B cell (primary cell): ENCODE measurements at regions of chr15 and their contacts with region 1.

Region 1: GRCh38 chr15:41811432-41812195 is 16.3 kb upstream of the JMJD7 start:
- DNase-seq: peak; percentile 82
- ATAC-seq: peak; percentile 92
- H3K4me3 ChIP-seq: no peak overlapping the region
- H3K4me3 Mint-ChIP-seq: no peak overlapping the region
- H3K27ac ChIP-seq: no peak overlapping the region
- H3K27ac Mint-ChIP-seq: no peak overlapping the region
- H3K4me1 ChIP-seq: peaks cover 5 to 20% of the 10 kb centered on the region in 2 donors
- H3K4me1 Mint-ChIP-seq: peaks cover 10% of the 10 kb centered on the region
- H3K27me3 ChIP-seq: no peaks in the 10 kb centered on the region
- H3K27me3 Mint-ChIP-seq: no peaks in the 10 kb centered on the region
- CTCF ChIP-seq: peak; percentile 88

Region 2: DNA sequence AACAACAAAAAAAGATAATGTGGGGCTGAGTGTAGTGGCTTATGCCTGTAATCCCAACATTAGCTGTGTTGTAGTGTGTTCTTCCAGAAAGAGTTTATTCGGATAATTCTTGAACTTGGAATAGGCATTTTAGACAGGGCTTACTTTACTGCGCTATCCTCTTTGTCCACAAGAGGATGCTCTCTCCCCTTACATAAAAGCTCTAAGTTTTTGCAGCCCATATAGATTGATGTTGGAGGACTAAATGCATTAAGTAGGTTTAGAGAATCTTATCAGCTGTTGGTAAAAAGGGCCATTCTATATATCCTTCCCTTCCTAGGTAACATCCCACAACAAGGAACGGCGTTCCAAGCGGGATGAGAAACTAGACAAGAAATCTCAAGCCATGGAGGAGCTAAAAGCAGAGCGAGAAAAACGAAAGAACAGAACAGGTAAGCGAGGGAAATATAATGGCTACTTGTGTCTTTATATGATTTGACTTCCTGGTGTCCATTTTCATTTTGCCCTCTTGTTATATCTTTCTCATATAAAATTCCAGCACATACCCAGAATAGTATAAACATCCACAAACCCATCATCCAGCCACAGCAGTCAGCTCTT is 345.7 kb before region 1 on chr15:
- CTCF ChIA-PET with region 1: interaction called, 36 read pairs
- POLR2A ChIA-PET with region 1: interaction called, 9 read pairs
- intact Hi-C with region 1: loop called (anchors 2 kb)
- DNase-seq: peak; percentile 60
- ATAC-seq: peak; percentile 54
- H3K4me3 ChIP-seq: no peak overlapping the region
- H3K4me3 Mint-ChIP-seq: no peak overlapping the region
- H3K27ac ChIP-seq: no peak overlapping the region
- H3K27ac Mint-ChIP-seq: no peak overlapping the region
- H3K4me1 ChIP-seq: no peaks in the 10 kb centered on the region
- H3K4me1 Mint-ChIP-seq: peaks cover 5% of the 10 kb centered on the region
- H3K27me3 ChIP-seq: no peaks in the 10 kb centered on the region
- H3K27me3 Mint-ChIP-seq: no peaks in the 10 kb centered on the region
- CTCF ChIP-seq: peak; percentile 95

Region 3: DNA sequence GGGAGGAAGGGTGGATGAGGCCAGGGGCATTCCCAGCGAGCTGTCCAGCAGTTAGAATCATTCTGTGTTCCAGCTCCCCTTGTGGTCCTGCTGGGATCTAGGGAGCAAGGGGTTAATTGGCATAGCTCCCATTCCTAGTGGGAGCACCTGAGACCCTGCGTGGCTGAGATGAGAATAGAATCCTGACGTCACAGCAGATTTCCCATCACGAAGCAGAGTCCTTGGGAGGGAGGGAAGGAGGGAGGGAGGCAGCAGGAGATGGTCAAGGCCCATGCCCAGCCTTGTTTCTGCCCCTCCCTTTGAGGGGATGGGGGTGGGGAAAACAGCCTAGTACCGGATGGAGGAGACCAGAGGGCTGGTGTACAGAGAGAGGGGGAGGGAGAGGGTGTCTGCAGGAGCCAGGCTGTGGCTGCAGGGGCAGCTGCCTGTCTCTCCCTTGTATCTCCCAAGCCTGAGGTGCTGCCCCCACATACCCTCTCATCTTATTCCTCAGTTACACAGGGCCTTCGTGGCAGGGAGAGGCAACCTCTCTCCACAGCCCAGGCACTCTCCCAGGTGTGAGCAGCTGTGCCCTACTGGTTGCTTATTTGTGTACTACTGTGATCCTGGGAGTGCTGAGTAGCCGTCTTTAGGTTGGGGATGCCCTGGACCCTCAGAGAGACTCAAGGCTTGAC is 247.2 kb before region 1 on chr15:
- CTCF ChIA-PET with region 1: no interaction called
- POLR2A ChIA-PET with region 1: no interaction called
- intact Hi-C with region 1: no loop called
- DNase-seq: no peak
- ATAC-seq: no peak
- H3K4me3 ChIP-seq: no peak overlapping the region
- H3K4me3 Mint-ChIP-seq: no peak overlapping the region
- H3K27ac ChIP-seq: no peak overlapping the region
- H3K27ac Mint-ChIP-seq: no peak overlapping the region
- H3K4me1 ChIP-seq: peaks cover 6 to 8% of the 10 kb centered on the region in 2 donors
- H3K4me1 Mint-ChIP-seq: peaks cover 4% of the 10 kb centered on the region
- H3K27me3 ChIP-seq: peaks cover 0 to 28% (median 10%) of the 10 kb centered on the region in 4 experiments
- H3K27me3 Mint-ChIP-seq: peaks cover 31% of the 10 kb centered on the region
- CTCF ChIP-seq: no peak

Region 4: DNA sequence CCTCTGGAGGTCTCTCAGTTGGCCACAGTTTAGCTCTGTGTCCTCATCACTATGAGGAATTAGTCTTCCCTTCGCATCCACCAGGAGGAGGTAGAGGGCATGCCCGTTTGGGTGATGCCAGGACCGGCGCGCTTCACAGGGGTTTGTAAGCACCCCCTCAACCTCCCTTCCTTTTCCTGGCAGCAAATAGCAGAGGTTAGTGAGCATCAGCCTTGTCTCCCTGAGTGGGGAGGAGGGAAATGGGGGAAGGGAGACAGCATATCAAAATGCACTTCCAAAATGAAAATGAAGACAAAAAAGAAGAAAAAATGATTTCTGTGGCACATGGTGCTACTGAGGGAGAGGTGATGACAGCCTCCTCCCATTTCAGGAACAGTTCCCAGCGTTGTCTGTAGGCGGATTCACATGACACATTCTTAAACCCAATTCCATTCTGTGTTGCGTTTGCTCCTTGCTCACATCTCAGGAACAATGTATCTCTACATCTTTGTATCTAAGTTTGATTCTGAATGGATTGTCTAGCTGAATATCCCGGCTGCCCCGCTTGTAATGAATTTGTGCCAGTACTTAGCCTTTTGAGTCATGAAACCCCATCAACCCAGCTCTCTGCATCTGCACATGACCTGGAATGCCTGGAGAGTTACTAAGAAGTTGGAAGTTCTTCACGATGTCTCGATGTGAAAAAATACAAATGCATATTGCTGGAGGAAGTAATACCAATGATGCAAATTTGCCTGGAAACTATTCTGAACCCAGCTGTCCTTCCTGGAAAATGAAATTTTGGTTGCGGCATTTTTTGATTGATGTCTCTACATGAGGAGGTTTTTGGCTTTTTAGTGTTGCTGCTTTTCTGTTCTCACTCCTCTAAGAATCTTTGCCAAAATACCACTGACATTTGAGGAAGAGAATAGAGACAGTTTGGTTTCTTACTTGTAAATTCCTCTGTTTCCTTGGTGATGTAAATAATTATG is 207.4 kb before region 1 on chr15:
- CTCF ChIA-PET with region 1: interaction called, 46 read pairs
- POLR2A ChIA-PET with region 1: no interaction called
- intact Hi-C with region 1: no loop called
- DNase-seq: peak; percentile 74
- ATAC-seq: peak; percentile 85
- H3K4me3 ChIP-seq: peak overlapping the region in 3 of 5 experiments; percentile 2 to 31 (median 29)
- H3K4me3 Mint-ChIP-seq: peak overlapping the region; percentile 77
- H3K27ac ChIP-seq: no peak overlapping the region
- H3K27ac Mint-ChIP-seq: no peak overlapping the region
- H3K4me1 ChIP-seq: peaks cover 8 to 10% of the 10 kb centered on the region in 2 donors
- H3K4me1 Mint-ChIP-seq: peaks cover 9% of the 10 kb centered on the region
- H3K27me3 ChIP-seq: peaks cover 0 to 17% (median 5%) of the 10 kb centered on the region in 4 experiments
- H3K27me3 Mint-ChIP-seq: peaks cover 34% of the 10 kb centered on the region
- CTCF ChIP-seq: peak; percentile 80

Region 5: GRCh38 chr15:41695750-41696426 is 115.7 kb before region 1 on chr15:
- CTCF ChIA-PET with region 1: interaction called, 25 read pairs
- POLR2A ChIA-PET with region 1: no interaction called
- intact Hi-C with region 1: loop called (anchors 1 kb)
- DNase-seq: peak; percentile 80
- ATAC-seq: peak; percentile 99
- H3K4me3 ChIP-seq: peak overlapping the region in 2 of 5 experiments; percentile 19 to 21
- H3K4me3 Mint-ChIP-seq: peak overlapping the region; percentile 35
- H3K27ac ChIP-seq: peak overlapping the region; percentile 52 to 77
- H3K27ac Mint-ChIP-seq: peak overlapping the region; percentile 51
- H3K4me1 ChIP-seq: peaks cover 12 to 28% of the 10 kb centered on the region in 2 donors
- H3K4me1 Mint-ChIP-seq: peaks cover 45% of the 10 kb centered on the region
- H3K27me3 ChIP-seq: no peaks in the 10 kb centered on the region
- H3K27me3 Mint-ChIP-seq: no peaks in the 10 kb centered on the region
- CTCF ChIP-seq: peak; percentile 66

Region 6: GRCh38 chr15:41790756-41791546 is 20.7 kb before region 1 on chr15:
- CTCF ChIA-PET with region 1: interaction called, 24 read pairs
- POLR2A ChIA-PET with region 1: no interaction called
- intact Hi-C with region 1: no loop called
- DNase-seq: no peak
- ATAC-seq: no peak
- H3K4me3 ChIP-seq: no peak overlapping the region
- H3K4me3 Mint-ChIP-seq: peak overlapping the region; percentile 4
- H3K27ac ChIP-seq: no peak overlapping the region
- H3K27ac Mint-ChIP-seq: no peak overlapping the region
- H3K4me1 ChIP-seq: peaks cover 32 to 41% of the 10 kb centered on the region in 2 donors
- H3K4me1 Mint-ChIP-seq: peaks cover 54% of the 10 kb centered on the region
- H3K27me3 ChIP-seq: no peaks in the 10 kb centered on the region
- H3K27me3 Mint-ChIP-seq: no peaks in the 10 kb centered on the region
- CTCF ChIP-seq: no peak

Region 7: GRCh38 chr15:41795996-41796856 is 15.4 kb before region 1 on chr15:
- CTCF ChIA-PET with region 1: interaction called, 27 read pairs
- POLR2A ChIA-PET with region 1: no interaction called
- intact Hi-C with region 1: no loop called
- DNase-seq: no peak
- ATAC-seq: no peak
- H3K4me3 ChIP-seq: no peak overlapping the region
- H3K4me3 Mint-ChIP-seq: no peak overlapping the region
- H3K27ac ChIP-seq: no peak overlapping the region
- H3K27ac Mint-ChIP-seq: peak overlapping the region; percentile 16
- H3K4me1 ChIP-seq: peaks cover 6 to 18% of the 10 kb centered on the region in 2 donors
- H3K4me1 Mint-ChIP-seq: peaks cover 30% of the 10 kb centered on the region
- H3K27me3 ChIP-seq: no peaks in the 10 kb centered on the region
- H3K27me3 Mint-ChIP-seq: no peaks in the 10 kb centered on the region
- CTCF ChIP-seq: no peak

Region 8: DNA sequence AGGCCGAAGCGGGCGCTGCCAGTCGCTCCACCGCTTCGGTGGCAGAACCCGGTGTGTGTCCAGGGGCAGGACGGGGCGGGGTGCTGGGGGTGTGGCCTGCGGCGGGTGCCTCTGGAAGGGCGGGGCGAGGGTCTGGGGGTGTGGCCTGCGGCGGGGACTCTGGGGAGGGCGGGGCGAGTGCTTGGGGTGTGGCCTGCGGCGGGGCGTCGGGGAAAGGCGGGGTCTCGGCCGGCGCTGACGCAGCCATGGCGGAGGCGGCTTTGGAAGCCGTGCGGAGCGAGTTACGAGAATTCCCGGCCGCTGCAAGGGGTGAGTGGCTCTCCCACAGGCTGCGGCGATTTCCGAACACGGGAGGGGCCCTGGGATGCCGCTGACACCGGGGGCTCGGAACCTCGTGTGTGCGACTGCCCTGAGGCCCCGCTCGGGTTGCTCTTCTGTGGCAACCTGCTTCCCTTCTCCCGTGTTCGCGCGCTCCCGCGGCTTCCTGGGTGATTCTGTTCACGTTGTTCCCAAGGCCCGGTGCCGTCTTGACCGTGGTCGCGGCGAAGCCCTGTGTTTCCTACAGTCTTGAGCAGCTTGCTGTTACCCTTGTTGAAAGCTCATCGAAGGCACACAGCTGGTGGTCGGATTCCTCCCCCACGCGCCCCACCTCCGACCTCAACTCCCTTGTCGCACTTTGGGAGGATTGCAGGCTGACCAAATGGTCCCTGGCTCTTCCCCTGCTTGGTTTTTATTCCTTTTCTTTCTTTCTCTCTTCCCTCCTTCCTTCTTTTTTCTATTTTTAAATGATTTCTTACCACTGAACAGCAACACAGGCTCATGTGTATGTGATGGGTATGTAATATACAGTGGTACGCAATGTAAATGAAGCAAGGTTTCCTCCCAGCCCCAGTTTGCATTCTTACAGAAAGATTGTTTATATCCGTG is 16.5 kb after region 1 on chr15 and contains the start of gene JMJD7:
- CTCF ChIA-PET with region 1: interaction called, 23 read pairs
- POLR2A ChIA-PET with region 1: no interaction called
- intact Hi-C with region 1: no loop called
- DNase-seq: peak; percentile 93
- ATAC-seq: peak; percentile 99
- H3K4me3 ChIP-seq: peak within 1 kb of the TSS; percentile 54 to 95 (median 87)
- H3K4me3 Mint-ChIP-seq: peak within 1 kb of the TSS; percentile 86
- H3K27ac ChIP-seq: peak within 1 kb of the TSS; percentile 32 to 53
- H3K27ac Mint-ChIP-seq: peak within 1 kb of the TSS; percentile 63
- H3K4me1 ChIP-seq: peaks cover 16 to 28% of the 10 kb centered on the region in 2 donors
- H3K4me1 Mint-ChIP-seq: peaks cover 26% of the 10 kb centered on the region
- H3K27me3 ChIP-seq: no peaks in the 10 kb centered on the region
- H3K27me3 Mint-ChIP-seq: no peaks in the 10 kb centered on the region
- CTCF ChIP-seq: no peak
- total RNA-seq, gene JMJD7: 41.1 and 43.9 TPM in 2 replicates